ENCODE measurements at regions of chr11 and their contacts with region 1.

Region 1: DNA sequence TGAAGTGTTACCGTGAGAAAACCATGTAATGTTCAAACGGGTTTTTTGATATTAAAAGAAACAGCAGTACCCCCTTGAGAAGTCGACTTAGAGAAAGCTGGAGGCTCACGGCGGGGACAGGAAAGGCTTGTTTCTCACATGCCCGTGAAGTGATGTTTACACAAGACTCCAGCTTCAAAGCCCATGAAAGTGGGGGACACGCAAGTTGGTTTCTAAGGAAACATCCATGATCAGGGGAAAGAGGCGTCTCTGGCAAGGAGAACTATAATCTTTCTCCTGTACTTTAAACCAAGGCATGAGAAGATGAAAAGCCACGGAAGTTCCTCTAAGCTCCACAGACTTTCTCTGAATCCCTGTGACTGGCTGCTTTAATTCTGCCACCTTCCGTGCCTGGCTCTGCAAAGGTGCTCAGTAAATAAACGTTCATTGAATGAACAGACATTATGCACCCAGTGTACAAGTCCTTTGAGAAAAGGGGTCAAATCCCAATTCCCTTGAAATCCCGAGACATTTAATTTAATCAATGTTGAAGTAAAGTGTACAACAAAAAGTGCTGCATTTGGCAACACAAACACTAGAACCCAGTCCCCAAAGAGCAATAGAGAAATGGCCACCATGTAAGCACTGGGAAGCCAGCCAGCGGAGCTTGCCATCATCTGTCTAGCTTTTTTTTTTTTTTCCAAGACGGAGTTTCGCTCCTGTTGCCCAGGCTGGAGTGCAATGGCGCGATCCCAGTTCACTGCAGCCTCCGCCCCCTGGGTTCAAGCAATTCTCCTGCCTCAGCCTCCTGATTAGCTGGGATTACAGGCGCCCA is 58.7 kb downstream of the AHNAK start:
- DNase-seq: no peak
- ATAC-seq: no peak
- H3K4me3 ChIP-seq: no peak overlapping the region
- H3K27ac ChIP-seq: no peak overlapping the region
- H3K4me1 ChIP-seq: no peaks in the 10 kb centered on the region
- H3K27me3 ChIP-seq: no peaks in the 10 kb centered on the region
- CTCF ChIP-seq: no peak

Region 2: DNA sequence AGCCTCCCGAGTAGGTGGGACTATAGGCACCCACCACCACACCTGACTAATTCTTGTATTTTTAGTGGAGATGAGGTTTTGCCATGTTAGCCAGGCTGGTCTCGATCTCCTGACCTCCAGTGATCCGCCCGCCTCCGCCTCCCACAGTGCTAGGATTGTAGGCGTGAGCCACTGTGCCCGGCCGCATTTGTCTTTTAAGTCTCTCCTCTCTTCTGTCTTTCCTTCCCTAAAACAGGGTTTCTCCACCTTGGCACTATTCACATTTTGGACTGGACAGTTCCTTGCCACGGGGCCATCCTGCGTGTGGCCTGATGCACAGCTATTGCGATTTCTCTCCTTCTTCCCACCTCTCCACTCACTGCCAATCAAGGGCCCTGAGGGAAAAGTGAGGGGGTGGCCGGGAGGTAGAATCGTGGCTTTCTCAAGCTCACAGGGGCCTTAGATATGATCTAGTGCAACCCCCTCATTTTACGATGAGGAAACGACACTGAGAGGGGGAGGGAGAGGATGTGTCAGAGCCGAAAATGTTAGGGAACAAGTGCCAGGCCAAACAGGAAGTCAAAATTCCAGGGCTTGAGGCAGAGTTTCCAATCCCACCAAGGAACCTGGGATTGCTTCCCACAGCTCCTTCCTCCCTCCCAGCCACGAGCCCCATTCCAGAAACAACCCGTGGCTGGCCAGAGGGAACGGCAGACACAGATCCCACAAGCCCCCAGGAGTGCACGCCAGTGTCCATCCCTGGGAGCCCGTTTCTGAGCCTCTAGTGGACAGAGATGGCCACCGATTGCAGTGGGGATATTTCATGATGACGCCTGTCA is 48.0 kb before region 1 on chr11:
- intact Hi-C with region 1: loop called (anchors 10 kb)
- DNase-seq: no peak
- ATAC-seq: peak; percentile 62
- H3K4me3 ChIP-seq: no peak overlapping the region
- H3K27ac ChIP-seq: peak overlapping the region; percentile 80
- H3K4me1 ChIP-seq: peaks cover 43% of the 10 kb centered on the region
- H3K27me3 ChIP-seq: no peaks in the 10 kb centered on the region
- CTCF ChIP-seq: peak; percentile 10

Measured in upper lobe of right lung (tissue), 1 donor.